ENCODE measurements at regions of chr7 and their contacts with region 1.

Region 1: DNA sequence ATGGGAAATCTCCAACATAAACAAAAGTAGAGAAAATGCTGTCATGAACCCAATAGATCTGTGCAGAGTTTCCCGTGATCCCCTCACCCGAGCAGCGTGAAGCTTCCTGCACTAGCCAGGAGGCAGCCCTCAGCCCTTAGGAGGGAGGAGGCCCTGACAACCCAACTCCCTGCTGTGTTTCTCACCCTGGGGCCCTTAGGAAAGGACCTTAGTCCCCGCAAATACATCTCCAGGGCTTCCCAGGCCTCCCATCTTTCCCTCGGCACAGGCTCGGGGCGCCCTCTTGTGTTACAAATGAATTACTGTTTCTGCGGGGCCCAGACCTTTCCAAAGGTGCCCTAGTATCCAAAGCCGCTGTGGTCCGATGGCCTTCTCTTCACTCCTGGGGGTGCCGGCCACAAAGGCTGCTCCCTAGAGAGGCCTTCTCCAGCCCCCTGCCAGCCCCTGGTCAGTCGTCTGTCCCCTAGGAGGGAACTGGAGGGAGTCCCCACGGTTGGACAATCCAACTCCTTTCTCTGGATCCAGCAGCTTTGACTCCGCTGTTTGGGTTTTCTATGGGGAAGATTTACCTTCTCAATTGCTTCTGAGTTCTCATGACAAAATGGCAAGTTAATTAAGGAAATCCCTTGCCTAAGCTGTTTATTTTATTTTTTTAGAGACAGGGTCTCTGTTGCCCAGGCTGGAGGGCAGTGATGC is 49.9 kb upstream of the SH2B2 start:
- DNase-seq: peak; percentile 70
- H3K4me3 ChIP-seq: no peak overlapping the region
- H3K27ac ChIP-seq: no peak overlapping the region
- H3K4me1 ChIP-seq: no peaks in the 10 kb centered on the region
- H3K27me3 ChIP-seq: no peaks in the 10 kb centered on the region
- CTCF ChIP-seq: peak; percentile 72

Region 2: GRCh38 chr7:101602484-101603241 is 634.1 kb before region 1 on chr7:
- intact Hi-C with region 1: loop called (anchors 10 kb)
- DNase-seq: peak; percentile 83
- H3K4me3 ChIP-seq: no peak overlapping the region
- H3K27ac ChIP-seq: no peak overlapping the region
- H3K4me1 ChIP-seq: no peaks in the 10 kb centered on the region
- H3K27me3 ChIP-seq: no peaks in the 10 kb centered on the region
- CTCF ChIP-seq: peak; percentile 84

Region 3: GRCh38 chr7:101688183-101688831 is 548.4 kb before region 1 on chr7:
- intact Hi-C with region 1: loop called (anchors 5 kb)
- DNase-seq: peak; percentile 87
- H3K4me3 ChIP-seq: peak overlapping the region; percentile 12
- H3K27ac ChIP-seq: no peak overlapping the region
- H3K4me1 ChIP-seq: no peaks in the 10 kb centered on the region
- H3K27me3 ChIP-seq: no peaks in the 10 kb centered on the region
- CTCF ChIP-seq: peak; percentile 96

Region 4: GRCh38 chr7:101815835-101816493 is 420.8 kb before region 1 on chr7:
- intact Hi-C with region 1: loop called (anchors 5 kb)
- DNase-seq: peak; percentile 63
- H3K4me3 ChIP-seq: peak overlapping the region; percentile 32
- H3K27ac ChIP-seq: peak overlapping the region; percentile 36
- H3K4me1 ChIP-seq: no peaks in the 10 kb centered on the region
- H3K27me3 ChIP-seq: no peaks in the 10 kb centered on the region
- CTCF ChIP-seq: no peak

Region 5: GRCh38 chr7:102205915-102206314 is 30.8 kb before region 1 on chr7:
- intact Hi-C with region 1: no loop called
- DNase-seq: no peak
- H3K4me3 ChIP-seq: no peak overlapping the region
- H3K27ac ChIP-seq: no peak overlapping the region
- H3K4me1 ChIP-seq: no peaks in the 10 kb centered on the region
- H3K27me3 ChIP-seq: no peaks in the 10 kb centered on the region
- CTCF ChIP-seq: no peak

Measured in colonic mucosa (tissue), 4 donors.